A673 (cell line): ENCODE measurements at regions of chr11 and their contacts with region 1.

Region 1: DNA sequence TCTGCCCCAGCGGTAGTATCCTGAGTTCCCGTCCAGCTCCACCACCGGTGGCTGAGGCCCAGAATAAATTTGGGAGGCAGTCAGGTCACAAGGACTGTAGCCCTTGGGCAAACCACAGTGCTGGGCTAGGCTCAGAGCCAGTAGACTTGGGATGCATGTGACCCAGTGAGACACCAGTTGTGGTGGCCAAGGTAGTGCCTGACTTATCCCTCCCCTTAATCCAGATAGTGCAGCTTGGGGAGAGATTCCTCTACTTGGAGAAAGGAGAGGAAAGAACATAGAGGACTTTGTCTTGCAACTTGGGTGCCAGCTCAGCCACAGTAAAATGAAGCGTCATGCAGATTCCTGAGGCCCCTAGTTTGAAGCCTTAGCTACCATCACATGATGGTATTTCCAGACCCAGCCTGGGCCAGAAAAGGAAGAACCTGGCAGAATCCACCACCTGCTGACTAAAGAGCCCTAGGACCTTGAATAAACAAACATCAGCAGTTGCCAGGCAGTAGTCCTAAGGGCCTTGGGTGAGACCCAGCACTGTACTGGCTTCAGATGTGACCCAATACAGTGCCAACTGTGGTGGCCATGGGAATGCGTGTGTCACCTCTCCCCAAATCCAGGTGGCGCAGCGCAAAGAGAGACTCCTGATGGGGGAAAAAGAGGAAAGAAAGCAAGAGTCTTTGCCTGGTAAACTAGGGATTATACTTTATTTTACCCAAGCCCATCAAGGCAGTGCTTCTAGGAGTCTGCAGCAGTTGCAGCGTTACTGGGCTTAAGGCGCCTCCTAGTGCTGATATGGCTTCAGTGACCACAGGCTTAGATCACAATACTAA is 17.0 kb upstream of the DDX10 start:
- DNase-seq: peak; percentile 86
- H3K4me3 ChIP-seq: no peak overlapping the region
- H3K27ac ChIP-seq: no peak overlapping the region
- H3K4me1 ChIP-seq: no peaks in the 10 kb centered on the region
- H3K27me3 ChIP-seq: no peaks in the 10 kb centered on the region
- CTCF ChIP-seq: peak; percentile 96

Region 2: DNA sequence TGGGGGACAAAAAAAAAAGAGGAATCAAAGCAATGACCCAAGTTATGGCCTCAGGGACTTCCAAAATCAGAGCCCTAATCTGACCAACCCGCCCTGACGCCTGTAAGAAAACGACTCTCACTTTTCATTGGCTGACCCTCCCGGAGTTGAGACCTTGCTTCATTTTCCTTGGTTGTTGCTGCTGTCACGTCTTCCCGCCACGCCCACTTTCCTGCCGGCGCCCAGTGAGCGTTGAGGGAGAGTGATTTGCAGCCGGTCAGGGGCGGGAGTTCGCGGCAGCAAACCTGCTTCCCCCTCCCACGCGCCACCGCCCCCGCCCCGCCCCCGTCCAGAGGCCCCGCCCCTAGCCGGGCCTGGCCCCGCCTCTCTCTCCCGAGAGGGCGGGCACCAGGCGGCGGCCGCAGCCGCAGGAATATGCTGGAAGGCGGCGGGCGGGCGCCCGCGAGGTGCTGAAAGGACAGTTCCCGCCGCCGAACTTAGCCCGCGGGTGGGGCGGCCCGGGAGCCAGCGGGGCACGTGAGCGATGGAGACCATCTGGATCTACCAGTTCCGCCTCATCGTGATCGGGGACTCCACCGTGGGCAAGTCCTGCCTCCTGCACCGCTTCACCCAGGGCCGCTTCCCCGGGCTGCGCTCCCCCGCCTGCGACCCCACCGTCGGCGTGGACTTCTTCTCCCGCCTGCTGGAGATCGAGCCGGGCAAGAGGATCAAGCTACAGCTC is 719.7 kb before region 1 on chr11 and contains the start of gene RAB39A:
- CTCF ChIA-PET with region 1: no interaction called
- POLR2A ChIA-PET with region 1: no interaction called
- intact Hi-C with region 1: loop called (anchors 10 kb)
- DNase-seq: peak; percentile 99
- H3K4me3 ChIP-seq: peak within 1 kb of the TSS; percentile 65
- H3K27ac ChIP-seq: peak within 1 kb of the TSS; percentile 64
- H3K4me1 ChIP-seq: peaks cover 3% of the 10 kb centered on the region
- H3K27me3 ChIP-seq: peaks cover 13% of the 10 kb centered on the region
- CTCF ChIP-seq: no peak
- total RNA-seq, gene RAB39A: 16.3 and 17.2 TPM in 2 replicates

Region 3: GRCh38 chr11:108008656-108009496 is 639.0 kb before region 1 on chr11 and contains the start of gene CUL5:
- CTCF ChIA-PET with region 1: interaction called, 3 read pairs
- POLR2A ChIA-PET with region 1: no interaction called
- intact Hi-C with region 1: loop called (anchors 5 kb)
- DNase-seq: peak; percentile 97
- H3K4me3 ChIP-seq: peak within 1 kb of the TSS; percentile 95
- H3K27ac ChIP-seq: peak within 1 kb of the TSS; percentile 99
- H3K4me1 ChIP-seq: peaks cover 4% of the 10 kb centered on the region
- H3K27me3 ChIP-seq: no peaks in the 10 kb centered on the region
- CTCF ChIP-seq: peak; percentile 98
- total RNA-seq, gene CUL5: 62.3 and 63.1 TPM in 2 replicates

Region 4: DNA sequence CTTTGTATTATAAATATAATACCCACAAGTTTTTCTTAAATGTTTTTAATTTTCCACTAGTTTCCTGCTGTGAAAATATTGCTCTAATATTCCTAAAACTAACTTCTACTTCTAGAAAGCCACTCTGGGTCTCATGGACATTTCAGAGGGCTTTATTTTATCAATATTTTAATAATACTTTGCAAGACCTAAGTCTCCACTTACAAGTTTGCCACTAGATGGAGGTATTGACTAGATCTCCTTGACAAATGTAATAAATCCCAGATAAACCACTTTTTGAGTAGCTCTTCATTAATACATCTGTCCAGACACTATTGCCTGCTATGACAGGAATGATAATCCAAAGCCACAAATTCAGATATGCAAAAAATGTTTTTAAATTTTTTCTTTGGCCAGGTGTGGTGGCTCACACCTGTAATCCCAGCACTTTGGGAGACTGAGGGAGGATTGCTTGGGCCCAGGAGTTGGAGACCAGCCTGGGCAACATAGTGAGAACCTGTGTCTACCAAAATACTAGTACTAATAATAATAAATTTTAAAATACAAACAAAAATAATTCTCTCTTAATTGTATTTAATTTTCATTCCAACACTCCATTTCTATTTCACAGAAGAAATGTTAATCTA is 530.1 kb before region 1 on chr11:
- CTCF ChIA-PET with region 1: interaction called, 6 read pairs
- POLR2A ChIA-PET with region 1: no interaction called
- intact Hi-C with region 1: loop called (anchors 1 kb)
- DNase-seq: peak; percentile 79
- H3K4me3 ChIP-seq: no peak overlapping the region
- H3K27ac ChIP-seq: no peak overlapping the region
- H3K4me1 ChIP-seq: peaks cover 6% of the 10 kb centered on the region
- H3K27me3 ChIP-seq: no peaks in the 10 kb centered on the region
- CTCF ChIP-seq: peak; percentile 72

Region 5: DNA sequence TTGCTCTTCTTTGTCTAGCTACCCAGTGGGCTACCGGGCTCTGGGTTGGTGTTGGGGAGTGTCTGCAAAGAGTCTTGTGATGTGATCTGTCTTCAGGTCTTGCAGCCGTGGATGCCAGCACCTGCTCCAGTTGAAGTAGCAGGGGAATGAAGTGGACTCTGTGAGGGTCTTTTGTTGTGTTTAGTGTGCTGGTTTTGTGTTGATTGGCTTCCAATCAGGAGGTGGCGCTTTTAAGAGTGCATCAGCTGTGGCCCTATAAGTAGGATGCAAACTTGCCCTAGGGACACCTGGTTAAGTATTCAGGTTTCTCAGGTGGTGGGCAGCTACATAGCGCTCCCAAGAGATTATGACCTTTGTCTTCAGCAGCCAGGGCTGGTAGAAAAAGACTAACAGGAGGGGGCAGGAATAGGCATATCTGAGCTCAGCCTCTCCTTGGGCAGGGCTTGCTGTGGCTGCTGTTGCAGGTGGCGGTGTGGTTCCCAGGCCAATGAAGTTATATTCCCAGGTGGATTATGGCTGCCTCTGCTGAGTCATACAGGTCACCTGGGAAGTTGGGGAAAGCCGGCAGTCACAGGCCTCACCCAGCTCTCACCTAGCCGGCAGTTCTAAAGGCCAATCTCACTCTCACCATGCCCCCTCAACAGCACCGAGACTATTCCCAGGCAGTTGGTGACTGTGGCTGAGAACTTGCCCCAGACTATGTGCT is 458.4 kb after region 1 on chr11:
- CTCF ChIA-PET with region 1: no interaction called
- POLR2A ChIA-PET with region 1: no interaction called
- intact Hi-C with region 1: no loop called
- DNase-seq: no peak
- H3K4me3 ChIP-seq: no peak overlapping the region
- H3K27ac ChIP-seq: no peak overlapping the region
- H3K4me1 ChIP-seq: no peaks in the 10 kb centered on the region
- H3K27me3 ChIP-seq: peaks cover 6% of the 10 kb centered on the region
- CTCF ChIP-seq: no peak